ENCODE measurements at regions of chr18 and their contacts with region 1.

Region 1: GRCh38 chr18:24726727-24727492 is 266.5 kb downstream of the HRH4 start:
- DNase-seq: peak; percentile 78
- H3K4me3 ChIP-seq: peak overlapping the region in 2 of 4 donors; percentile 25 to 27
- H3K27ac ChIP-seq: peak overlapping the region in 1 of 4 donors; percentile 43
- H3K4me1 ChIP-seq: peaks cover 0 to 17% (median 6%) of the 10 kb centered on the region in 4 donors
- H3K27me3 ChIP-seq: peaks cover 19% of the 10 kb centered on the region
- CTCF ChIP-seq: peak; percentile 71 to 82 (median 79)
- EP300 ChIP-seq: no peak
- POLR2A ChIP-seq: no peak

Region 2: DNA sequence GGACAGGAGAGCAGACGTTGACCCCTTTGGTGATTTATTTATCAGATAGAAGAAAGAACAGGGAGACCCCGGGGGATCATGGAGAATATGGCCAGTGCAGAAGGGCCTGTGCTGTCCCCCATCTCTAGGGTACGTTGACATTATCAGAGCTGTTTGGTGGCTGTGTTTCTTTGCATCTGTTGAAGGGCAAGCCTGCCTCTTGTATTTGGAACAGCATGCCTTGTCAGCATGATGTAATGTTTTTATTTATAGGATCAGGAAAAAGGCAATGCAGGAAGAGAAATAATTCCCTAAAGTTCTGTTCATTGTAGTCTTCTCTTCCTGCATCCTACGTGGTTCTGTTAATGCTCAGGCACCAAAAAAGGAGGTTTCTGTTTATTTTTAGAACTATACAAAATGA is 637.8 kb before region 1 on chr18:
- in situ Hi-C with region 1: no loop called
- intact Hi-C with region 1: no loop called
- DNase-seq: no peak
- H3K4me3 ChIP-seq: no peak overlapping the region
- H3K27ac ChIP-seq: no peak overlapping the region
- H3K4me1 ChIP-seq: no peaks in the 10 kb centered on the region
- H3K27me3 ChIP-seq: no peaks in the 10 kb centered on the region
- CTCF ChIP-seq: no peak
- EP300 ChIP-seq: no peak
- POLR2A ChIP-seq: no peak

Region 3: GRCh38 chr18:24354286-24354685 is 372.6 kb before region 1 on chr18:
- in situ Hi-C with region 1: loop called in 1 of 4 experiments (anchors 25 kb)
- intact Hi-C with region 1: loop called (anchors 10 kb)
- DNase-seq: no peak
- H3K4me3 ChIP-seq: no peak overlapping the region
- H3K27ac ChIP-seq: no peak overlapping the region
- H3K4me1 ChIP-seq: no peaks in the 10 kb centered on the region
- H3K27me3 ChIP-seq: no peaks in the 10 kb centered on the region
- CTCF ChIP-seq: no peak
- EP300 ChIP-seq: no peak
- POLR2A ChIP-seq: no peak

Region 4: GRCh38 chr18:24368749-24369148 is 358.2 kb before region 1 on chr18:
- in situ Hi-C with region 1: loop called in 1 of 4 experiments (anchors 25 kb)
- intact Hi-C with region 1: no loop called
- DNase-seq: no peak
- H3K4me3 ChIP-seq: no peak overlapping the region
- H3K27ac ChIP-seq: no peak overlapping the region
- H3K4me1 ChIP-seq: no peaks in the 10 kb centered on the region
- H3K27me3 ChIP-seq: no peaks in the 10 kb centered on the region
- CTCF ChIP-seq: no peak
- EP300 ChIP-seq: no peak
- POLR2A ChIP-seq: no peak

Measured in transverse colon (tissue), 4 donors.